Transverse colon (tissue), 4 donors: ENCODE measurements at regions of chrX and their contacts with region 1.

Region 1: DNA sequence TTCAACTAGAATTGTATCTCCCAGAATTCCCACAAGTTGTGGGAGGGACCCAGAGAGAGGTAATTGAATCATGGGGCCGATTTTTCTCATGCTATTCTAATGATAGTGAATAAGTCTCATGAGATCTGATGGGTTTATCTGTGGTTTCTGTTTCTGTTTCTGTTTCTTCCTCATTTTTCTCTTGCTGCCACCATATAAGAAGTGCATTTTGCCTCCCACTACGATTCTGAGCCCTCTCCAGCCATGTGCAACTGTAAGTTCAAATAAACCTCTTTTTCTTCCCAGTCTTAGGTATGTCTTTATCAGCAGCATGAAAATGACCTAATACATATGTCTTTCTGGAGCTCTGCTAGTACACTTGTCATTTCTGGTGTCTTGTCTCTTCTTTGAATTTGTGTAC is 22.1 kb upstream of the OR13H1 start:
- DNase-seq: no peak
- H3K4me3 ChIP-seq: no peak overlapping the region
- H3K27ac ChIP-seq: no peak overlapping the region
- H3K4me1 ChIP-seq: no peaks in the 10 kb centered on the region
- H3K27me3 ChIP-seq: no peaks in the 10 kb centered on the region
- CTCF ChIP-seq: no peak
- EP300 ChIP-seq: no peak
- POLR2A ChIP-seq: no peak

Region 2: DNA sequence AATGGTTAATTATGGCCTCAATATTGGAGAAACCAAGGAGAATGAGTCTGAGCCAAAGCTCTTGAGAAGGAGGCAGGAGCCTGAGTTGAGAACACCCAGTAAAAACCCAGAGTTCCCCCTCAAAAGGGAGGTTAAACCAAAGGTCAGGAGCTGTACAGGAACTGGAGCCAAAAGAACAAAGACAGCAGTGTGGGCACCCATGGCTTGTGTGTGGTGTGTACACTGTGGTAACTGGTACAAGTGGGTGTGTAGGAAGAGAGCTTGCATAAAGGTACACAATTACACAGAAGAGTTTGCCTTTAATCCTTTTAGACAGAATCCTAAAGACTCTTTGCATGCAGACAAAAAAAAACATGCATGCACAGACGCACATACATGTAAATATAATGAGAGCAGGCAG is 319.8 kb before region 1 on chrX:
- in situ Hi-C with region 1: no loop called
- intact Hi-C with region 1: no loop called
- DNase-seq: no peak
- H3K4me3 ChIP-seq: no peak overlapping the region
- H3K27ac ChIP-seq: no peak overlapping the region
- H3K4me1 ChIP-seq: no peaks in the 10 kb centered on the region
- H3K27me3 ChIP-seq: no peaks in the 10 kb centered on the region
- CTCF ChIP-seq: no peak
- EP300 ChIP-seq: no peak
- POLR2A ChIP-seq: no peak

Region 3: DNA sequence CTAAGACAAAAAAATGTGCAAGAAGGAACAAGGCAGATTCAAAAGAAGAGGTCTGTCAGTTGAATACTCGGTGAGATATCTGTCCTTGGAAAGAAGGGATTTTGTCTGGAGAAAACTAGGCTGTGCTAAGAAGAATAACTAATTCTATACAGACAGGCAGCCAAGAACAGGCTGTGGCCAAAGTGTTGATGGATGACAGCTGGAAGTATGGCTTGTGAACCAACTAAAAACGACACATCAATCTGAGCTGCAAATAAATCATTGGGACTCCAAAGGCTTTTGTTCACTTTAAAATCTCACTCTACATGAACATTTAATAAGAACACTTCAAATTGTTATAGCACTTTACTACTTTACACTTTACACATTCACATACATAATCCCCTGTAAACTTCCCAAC is 162.2 kb before region 1 on chrX:
- in situ Hi-C with region 1: no loop called
- intact Hi-C with region 1: no loop called
- DNase-seq: no peak
- H3K4me3 ChIP-seq: no peak overlapping the region
- H3K27ac ChIP-seq: no peak overlapping the region
- H3K4me1 ChIP-seq: no peaks in the 10 kb centered on the region
- H3K27me3 ChIP-seq: no peaks in the 10 kb centered on the region
- CTCF ChIP-seq: no peak
- EP300 ChIP-seq: no peak
- POLR2A ChIP-seq: no peak

Region 4: DNA sequence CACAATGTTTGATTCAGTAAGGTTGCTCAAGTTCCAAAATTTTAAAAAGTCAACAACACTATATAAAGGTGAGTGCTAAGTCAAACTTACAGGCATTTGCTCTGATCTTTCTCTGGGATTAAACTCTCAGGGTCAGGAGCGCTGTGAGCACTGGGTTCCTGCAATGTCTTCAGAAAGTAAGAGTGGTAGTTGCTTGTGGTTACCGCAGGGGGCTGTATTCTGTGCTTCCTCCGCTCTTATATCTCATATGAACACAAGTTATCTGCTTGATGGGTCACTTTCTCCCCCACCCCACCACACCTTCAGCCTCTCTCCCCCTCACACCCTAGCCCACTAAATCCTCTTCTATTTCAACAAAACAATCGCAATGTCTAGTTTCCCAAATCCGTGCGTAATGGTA is 116.3 kb before region 1 on chrX:
- in situ Hi-C with region 1: loop called in 1 of 4 experiments (anchors 25 kb)
- intact Hi-C with region 1: no loop called
- DNase-seq: no peak
- H3K4me3 ChIP-seq: no peak overlapping the region
- H3K27ac ChIP-seq: no peak overlapping the region
- H3K4me1 ChIP-seq: no peaks in the 10 kb centered on the region
- H3K27me3 ChIP-seq: no peaks in the 10 kb centered on the region
- CTCF ChIP-seq: no peak
- EP300 ChIP-seq: no peak
- POLR2A ChIP-seq: no peak